T-cell (primary cell): ENCODE measurements at regions of chr1 and their contacts with region 1.

Region 1: DNA sequence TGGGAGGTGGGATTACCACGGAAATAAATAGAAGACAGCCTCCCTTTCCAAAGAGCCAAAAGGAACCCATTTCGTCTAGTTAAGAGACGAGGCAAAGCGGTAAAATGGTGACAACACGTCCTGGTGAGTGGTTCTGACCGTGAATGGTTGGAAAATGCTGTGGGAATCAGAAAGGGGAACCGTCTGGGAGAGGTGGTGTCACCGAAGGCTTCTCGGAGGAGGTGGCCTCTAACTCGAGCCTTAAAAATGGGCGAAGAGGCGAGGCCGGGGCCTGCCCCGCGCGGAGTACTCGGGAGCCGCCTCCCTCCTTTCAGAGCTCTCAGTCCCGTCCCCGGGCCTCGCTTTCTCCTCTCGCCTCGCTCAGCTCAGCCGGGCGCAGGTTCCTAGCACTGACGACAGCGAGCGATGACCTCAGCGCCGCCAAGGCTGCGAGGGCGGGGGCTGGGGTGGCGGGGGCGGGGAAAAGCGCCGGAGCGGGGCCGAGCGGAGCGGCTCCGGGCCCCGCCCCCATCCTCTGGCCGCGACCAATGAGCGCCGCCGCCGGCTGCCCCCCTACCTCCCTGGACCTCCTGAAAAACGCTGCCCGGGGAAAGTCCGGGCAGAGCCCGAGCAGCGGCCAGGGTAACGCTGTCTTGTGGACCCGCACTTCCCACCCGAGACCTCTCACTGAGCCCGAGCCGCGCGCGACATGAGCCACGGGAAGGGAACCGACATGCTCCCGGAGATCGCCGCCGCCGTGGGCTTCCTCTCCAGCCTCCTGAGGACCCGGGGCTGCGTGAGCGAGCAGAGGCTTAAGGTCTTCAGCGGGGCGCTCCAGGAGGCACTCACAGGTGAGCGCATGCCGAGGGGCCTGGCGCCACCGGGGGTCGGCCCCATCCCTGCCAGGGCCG is at the start of gene BTG2:
- DNase-seq: peak; percentile 76 to 96 (median 91)
- ATAC-seq: peak; percentile 81 to 83 (median 82)
- H3K4me3 ChIP-seq: peak within 1 kb of the TSS; percentile 100
- H3K4me3 Mint-ChIP-seq: peak within 1 kb of the TSS; percentile 94 to 100 (median 98)
- H3K27ac ChIP-seq: peak within 1 kb of the TSS; percentile 99
- H3K27ac Mint-ChIP-seq: peak within 1 kb of the TSS; percentile 94 to 97
- H3K4me1 ChIP-seq: peaks cover 24 to 55% of the 10 kb centered on the region in 2 experiments
- H3K4me1 Mint-ChIP-seq: peaks cover 56 to 70% (median 67%) of the 10 kb centered on the region in 3 donors
- H3K27me3 ChIP-seq: no peaks in the 10 kb centered on the region
- H3K27me3 Mint-ChIP-seq: no peaks in the 10 kb centered on the region
- total RNA-seq, gene BTG2: 172 to 655 (median 186) TPM

Region 2: DNA sequence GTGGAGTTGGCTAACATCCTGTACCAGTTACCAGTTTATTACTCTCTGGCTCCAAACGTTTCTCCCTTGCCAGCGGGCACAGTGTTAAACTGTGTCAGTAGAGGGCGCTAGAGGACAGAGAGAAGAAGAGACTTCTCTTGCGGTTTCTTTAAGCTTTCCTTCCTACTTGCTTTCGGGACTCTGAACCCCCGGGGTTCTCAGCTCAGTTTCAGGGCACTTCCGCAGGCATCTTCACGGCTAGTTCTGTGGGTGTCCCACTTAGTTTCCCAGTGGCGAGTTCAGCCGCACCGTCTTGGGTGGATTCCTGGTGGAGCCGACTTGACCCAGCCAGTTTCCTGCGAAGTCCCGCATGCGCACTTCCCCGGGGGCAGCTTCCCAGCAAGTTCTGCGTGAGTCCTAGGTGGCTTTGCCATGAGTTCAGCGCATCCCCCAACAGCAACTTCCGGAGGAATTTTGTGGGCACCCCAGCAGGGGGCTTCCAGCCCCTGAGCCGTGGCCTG is 37.8 kb before region 1 on chr1:
- CTCF ChIA-PET with region 1: interaction called, 6 to 65 read pairs
- POLR2A ChIA-PET with region 1: interaction called, 7 to 15 read pairs
- DNase-seq: peak; percentile 53 to 94 (median 76)
- ATAC-seq: peak; percentile 55 to 69 (median 66)
- H3K4me3 ChIP-seq: peak overlapping the region; percentile 28 to 58
- H3K4me3 Mint-ChIP-seq: peak overlapping the region; percentile 85 to 86 (median 85)
- H3K27ac ChIP-seq: peak overlapping the region; percentile 60
- H3K27ac Mint-ChIP-seq: peak overlapping the region; percentile 90 to 93
- H3K4me1 ChIP-seq: peaks cover 14 to 37% of the 10 kb centered on the region in 2 experiments
- H3K4me1 Mint-ChIP-seq: peaks cover 20 to 24% (median 22%) of the 10 kb centered on the region in 3 donors
- H3K27me3 ChIP-seq: peaks cover 0 to 5% of the 10 kb centered on the region in 2 experiments
- H3K27me3 Mint-ChIP-seq: no peaks in the 10 kb centered on the region

Region 3: DNA sequence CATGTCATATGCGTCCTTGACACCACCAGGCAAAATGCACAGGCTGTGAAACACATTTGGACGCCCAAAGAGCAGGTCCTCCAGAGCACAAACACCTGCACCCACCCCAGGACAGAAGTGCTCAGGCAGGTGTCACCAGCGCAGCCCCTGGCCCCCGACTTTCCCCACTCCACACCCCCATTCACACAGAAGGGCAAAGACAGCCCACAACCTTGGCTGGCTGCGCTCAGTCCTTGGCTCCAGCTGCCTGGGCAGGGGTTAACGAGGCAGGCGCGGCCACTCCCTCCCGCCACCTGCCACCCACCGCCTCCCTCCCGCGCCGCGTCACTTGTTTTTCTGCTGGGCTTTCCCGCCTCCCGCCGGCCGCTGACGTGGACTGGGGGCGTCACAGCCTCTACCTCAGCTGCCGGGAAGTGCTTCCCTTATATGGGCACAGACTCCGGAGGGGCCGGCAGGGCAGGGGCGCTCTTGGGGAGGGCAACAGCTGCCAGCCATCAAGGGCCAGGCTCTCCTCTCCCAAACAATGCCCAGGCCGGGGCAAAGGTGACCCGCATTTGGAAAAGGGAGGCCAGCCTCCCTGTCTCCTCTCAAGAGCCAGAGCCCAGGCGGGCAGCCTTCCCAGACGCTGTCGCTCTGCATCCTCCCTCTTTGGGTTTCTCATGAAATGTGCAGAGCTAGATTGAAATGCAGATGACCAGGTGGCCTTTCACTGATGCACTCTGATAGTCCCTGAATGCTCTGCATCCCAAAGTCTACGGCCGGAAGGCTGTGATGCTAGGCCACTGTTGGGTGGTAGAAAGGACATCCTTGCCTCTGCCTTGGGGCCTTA is 14.7 kb before region 1 on chr1:
- CTCF ChIA-PET with region 1: interaction called, 5 to 17 read pairs
- POLR2A ChIA-PET with region 1: interaction called, 85 to 271 read pairs
- DNase-seq: peak; percentile 91 to 99 (median 98)
- ATAC-seq: peak; percentile 67 to 73 (median 71)
- H3K4me3 ChIP-seq: peak overlapping the region; percentile 30 to 49
- H3K4me3 Mint-ChIP-seq: peak overlapping the region; percentile 77 to 80 (median 78)
- H3K27ac ChIP-seq: peak overlapping the region; percentile 99
- H3K27ac Mint-ChIP-seq: peak overlapping the region; percentile 95 to 99
- H3K4me1 ChIP-seq: peaks cover 43 to 64% of the 10 kb centered on the region in 2 experiments
- H3K4me1 Mint-ChIP-seq: peaks cover 80 to 88% (median 83%) of the 10 kb centered on the region in 3 donors
- H3K27me3 ChIP-seq: no peaks in the 10 kb centered on the region
- H3K27me3 Mint-ChIP-seq: no peaks in the 10 kb centered on the region

Region 4: GRCh38 chr1:203326830-203327683 is 21.9 kb after region 1 on chr1:
- CTCF ChIA-PET with region 1: interaction called, 5 to 80 read pairs
- POLR2A ChIA-PET with region 1: interaction called, 183 to 366 read pairs
- DNase-seq: peak; percentile 83 to 97 (median 95)
- ATAC-seq: peak; percentile 76 to 84 (median 78)
- H3K4me3 ChIP-seq: peak overlapping the region; percentile 65 to 66
- H3K4me3 Mint-ChIP-seq: peak overlapping the region; percentile 70 to 82 (median 77)
- H3K27ac ChIP-seq: peak overlapping the region; percentile 100
- H3K27ac Mint-ChIP-seq: peak overlapping the region; percentile 97
- H3K4me1 ChIP-seq: peaks cover 53 to 66% of the 10 kb centered on the region in 2 experiments
- H3K4me1 Mint-ChIP-seq: peaks cover 59 to 67% (median 62%) of the 10 kb centered on the region in 3 donors
- H3K27me3 ChIP-seq: no peaks in the 10 kb centered on the region
- H3K27me3 Mint-ChIP-seq: no peaks in the 10 kb centered on the region

Region 5: GRCh38 chr1:203378556-203379245 is 73.5 kb after region 1 on chr1:
- CTCF ChIA-PET with region 1: no interaction called
- POLR2A ChIA-PET with region 1: no interaction called
- DNase-seq: no peak
- ATAC-seq: no peak
- H3K4me3 ChIP-seq: no peak overlapping the region
- H3K4me3 Mint-ChIP-seq: no peak overlapping the region
- H3K27ac ChIP-seq: no peak overlapping the region
- H3K27ac Mint-ChIP-seq: no peak overlapping the region
- H3K4me1 ChIP-seq: no peaks in the 10 kb centered on the region
- H3K4me1 Mint-ChIP-seq: peaks cover 0 to 3% (median 0%) of the 10 kb centered on the region in 3 donors
- H3K27me3 ChIP-seq: peaks cover 2 to 6% of the 10 kb centered on the region in 2 experiments
- H3K27me3 Mint-ChIP-seq: peaks cover 12 to 18% of the 10 kb centered on the region in 2 donors

Region 6: GRCh38 chr1:203593723-203594122 is 288.6 kb after region 1 on chr1:
- CTCF ChIA-PET with region 1: interaction called in 1 of 2 experiments, 12 read pairs
- POLR2A ChIA-PET with region 1: no interaction called
- DNase-seq: peak; percentile 12 to 75 (median 51)
- ATAC-seq: peak; percentile 62 to 93 (median 90)
- H3K4me3 ChIP-seq: no peak overlapping the region
- H3K4me3 Mint-ChIP-seq: no peak overlapping the region
- H3K27ac ChIP-seq: no peak overlapping the region
- H3K27ac Mint-ChIP-seq: peak overlapping the region in 1 of 2 donors; percentile 53
- H3K4me1 ChIP-seq: peaks cover 0 to 7% of the 10 kb centered on the region in 2 experiments
- H3K4me1 Mint-ChIP-seq: peaks cover 9 to 16% (median 15%) of the 10 kb centered on the region in 3 donors
- H3K27me3 ChIP-seq: peaks cover 0 to under 1% of the 10 kb centered on the region in 2 experiments
- H3K27me3 Mint-ChIP-seq: peaks cover 0 to 4% of the 10 kb centered on the region in 2 donors